ENCODE measurements at regions of chr6 and their contacts with region 1.

Region 1: GRCh38 chr6:170516783-170517616 is 36.1 kb downstream of the PSMB1 start:
- DNase-seq: peak; percentile 35 to 69
- ATAC-seq: peak; percentile 91 to 100 (median 100)
- H3K4me3 ChIP-seq: no peak overlapping the region
- H3K4me3 Mint-ChIP-seq: peak overlapping the region; percentile 18
- H3K27ac ChIP-seq: no peak overlapping the region
- H3K27ac Mint-ChIP-seq: no peak overlapping the region
- H3K4me1 ChIP-seq: peaks cover 3% of the 10 kb centered on the region
- H3K4me1 Mint-ChIP-seq: peaks cover 9 to 14% of the 10 kb centered on the region in 2 donors
- H3K27me3 ChIP-seq: peaks cover 9% of the 10 kb centered on the region
- H3K27me3 Mint-ChIP-seq: peaks cover 45 to 53% of the 10 kb centered on the region in 2 donors
- CTCF ChIP-seq: peak; percentile 90

Region 2: DNA sequence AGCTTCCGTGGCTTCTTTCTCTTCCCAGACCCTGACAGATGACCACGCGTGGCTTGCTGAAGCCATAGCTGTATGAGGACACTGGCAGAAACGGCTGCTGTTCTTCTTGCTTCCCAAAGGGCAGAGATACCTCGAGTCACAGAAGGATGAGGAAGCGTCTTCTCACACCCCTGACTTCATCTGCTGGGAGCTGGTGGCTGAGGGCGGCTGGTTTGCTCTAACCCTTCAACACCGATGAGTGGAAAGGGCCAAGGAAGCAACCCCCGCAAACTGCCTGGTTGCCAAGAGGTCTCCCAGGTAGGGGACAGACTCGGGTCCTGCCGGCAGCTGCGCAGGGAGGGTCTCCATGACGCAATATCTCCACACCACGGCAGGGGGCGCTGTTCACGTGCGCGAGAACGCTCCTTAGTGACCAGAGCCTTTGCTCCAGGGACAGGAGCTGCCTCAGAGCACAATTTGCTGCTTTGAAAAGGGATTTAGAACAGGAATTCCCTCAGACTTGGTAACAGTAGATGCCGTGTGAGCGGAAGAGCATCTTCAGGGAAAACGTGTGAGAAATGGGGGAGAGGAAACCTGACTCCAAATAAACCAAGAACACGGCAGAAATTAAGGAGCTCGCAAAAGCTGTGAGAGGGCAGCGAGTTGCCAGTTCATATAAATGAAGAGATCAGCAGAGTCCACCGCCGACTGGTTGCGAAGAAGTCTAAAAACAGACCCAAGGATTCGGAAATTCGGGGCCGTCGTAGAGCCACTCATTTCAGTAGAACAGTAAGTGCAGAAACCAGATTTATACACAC is 685.4 kb before region 1 on chr6:
- intact Hi-C with region 1: loop called (anchors 1 kb)
- DNase-seq: peak; percentile 69 to 81
- ATAC-seq: peak; percentile 73 to 87 (median 86)
- H3K4me3 ChIP-seq: no peak overlapping the region
- H3K4me3 Mint-ChIP-seq: no peak overlapping the region
- H3K27ac ChIP-seq: no peak overlapping the region
- H3K27ac Mint-ChIP-seq: no peak overlapping the region
- H3K4me1 ChIP-seq: peaks cover 7% of the 10 kb centered on the region
- H3K4me1 Mint-ChIP-seq: peaks cover 11 to 17% of the 10 kb centered on the region in 2 donors
- H3K27me3 ChIP-seq: peaks cover 8% of the 10 kb centered on the region
- H3K27me3 Mint-ChIP-seq: peaks cover 53 to 69% of the 10 kb centered on the region in 2 donors
- CTCF ChIP-seq: peak; percentile 97

Region 3: DNA sequence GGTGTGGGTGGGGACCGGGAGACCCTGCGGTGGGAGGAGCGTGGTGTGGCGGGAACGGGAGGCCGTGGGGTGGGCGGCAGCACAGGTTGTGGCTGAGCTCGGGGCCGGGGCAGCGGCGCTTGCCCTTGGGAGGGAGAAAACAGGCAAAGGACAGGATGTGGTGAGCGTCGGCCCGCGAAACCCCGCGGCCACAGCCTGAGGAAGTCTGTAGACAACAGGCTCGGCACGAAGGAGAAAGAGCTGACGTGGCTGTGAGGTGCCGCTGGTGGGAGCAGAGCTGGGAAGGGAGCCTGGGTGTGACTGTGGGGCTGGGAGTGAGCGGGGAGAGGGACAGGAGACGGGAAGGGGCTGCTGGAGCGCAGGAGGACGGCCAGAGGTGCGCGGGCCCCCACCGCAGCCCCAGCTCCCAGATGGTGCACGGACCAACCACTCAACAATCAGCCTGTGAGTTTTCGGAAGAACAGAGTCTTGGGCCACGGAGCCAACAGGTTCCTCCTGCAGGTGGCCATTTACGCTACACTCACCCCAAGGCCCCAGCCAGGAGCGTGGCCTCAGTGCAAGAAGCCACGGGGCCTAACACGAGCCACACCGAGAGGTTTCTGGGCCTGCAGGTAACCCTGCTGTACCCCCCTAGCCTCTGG is 428.9 kb before region 1 on chr6:
- intact Hi-C with region 1: loop called (anchors 2 kb)
- DNase-seq: peak; percentile 55 to 81
- ATAC-seq: peak; percentile 66 to 79 (median 74)
- H3K4me3 ChIP-seq: peak overlapping the region; percentile 48
- H3K4me3 Mint-ChIP-seq: peak overlapping the region; percentile 86
- H3K27ac ChIP-seq: peak overlapping the region; percentile 88
- H3K27ac Mint-ChIP-seq: peak overlapping the region; percentile 94 to 96
- H3K4me1 ChIP-seq: peaks cover 56% of the 10 kb centered on the region
- H3K4me1 Mint-ChIP-seq: peaks cover 29 to 52% of the 10 kb centered on the region in 2 donors
- H3K27me3 ChIP-seq: no peaks in the 10 kb centered on the region
- H3K27me3 Mint-ChIP-seq: no peaks in the 10 kb centered on the region
- CTCF ChIP-seq: no peak

Region 4: DNA sequence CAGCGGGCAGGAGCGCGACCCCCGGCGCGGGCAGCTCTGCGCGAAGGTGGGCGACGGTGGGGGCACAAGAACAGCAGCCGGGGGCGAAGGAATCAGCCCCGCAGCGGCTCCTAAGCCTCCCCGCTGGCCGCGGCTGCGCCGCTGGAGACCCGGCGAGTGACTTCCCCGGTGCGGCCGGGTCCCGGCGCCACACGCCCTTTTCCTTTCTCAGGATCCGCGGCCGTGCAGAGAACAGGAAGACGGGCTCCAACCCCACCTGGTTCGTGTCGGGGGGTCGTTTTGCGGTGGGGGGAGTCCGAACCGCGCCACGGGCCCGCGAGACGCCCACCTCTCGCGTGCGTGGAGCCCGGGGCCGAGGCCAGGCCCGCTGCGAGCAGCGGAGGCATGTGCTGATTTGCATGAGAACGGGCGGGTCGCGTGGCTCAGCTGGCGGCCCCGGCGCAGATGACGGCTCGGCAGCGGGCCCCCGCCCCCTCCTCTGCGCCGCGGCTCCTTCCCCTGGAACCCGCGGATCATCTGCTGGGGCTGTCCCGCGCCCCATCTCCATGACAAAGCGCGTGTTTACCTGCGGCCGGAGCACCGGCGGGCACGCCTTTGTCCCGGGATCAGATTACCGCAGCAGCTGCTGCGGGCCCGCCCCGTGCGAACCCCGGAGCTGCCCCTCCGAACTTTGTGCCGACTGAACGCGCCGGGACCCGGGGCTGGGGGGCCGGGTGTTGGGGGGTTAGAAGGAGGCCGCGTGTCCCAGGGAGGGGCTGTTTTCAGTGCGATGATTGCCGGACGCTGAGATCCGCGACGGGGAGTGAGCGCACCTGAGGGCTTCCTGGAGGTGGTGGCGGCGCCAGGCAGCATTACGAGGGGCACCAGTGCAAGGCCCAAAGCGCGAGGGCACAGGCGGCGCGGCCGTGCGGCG is 221.2 kb before region 1 on chr6:
- intact Hi-C with region 1: loop called (anchors 10 kb)
- DNase-seq: peak in 1 of 2 donors; percentile 69
- ATAC-seq: peak; percentile 57 to 67 (median 59)
- H3K4me3 ChIP-seq: peak overlapping the region; percentile 4
- H3K4me3 Mint-ChIP-seq: peak overlapping the region; percentile 73
- H3K27ac ChIP-seq: no peak overlapping the region
- H3K27ac Mint-ChIP-seq: peak overlapping the region in 1 of 2 donors; percentile 18
- H3K4me1 ChIP-seq: peaks cover 44% of the 10 kb centered on the region
- H3K4me1 Mint-ChIP-seq: peaks cover 17 to 44% of the 10 kb centered on the region in 2 donors
- H3K27me3 ChIP-seq: peaks cover 33% of the 10 kb centered on the region
- H3K27me3 Mint-ChIP-seq: peaks cover 25 to 60% of the 10 kb centered on the region in 2 donors
- CTCF ChIP-seq: no peak

Region 5: DNA sequence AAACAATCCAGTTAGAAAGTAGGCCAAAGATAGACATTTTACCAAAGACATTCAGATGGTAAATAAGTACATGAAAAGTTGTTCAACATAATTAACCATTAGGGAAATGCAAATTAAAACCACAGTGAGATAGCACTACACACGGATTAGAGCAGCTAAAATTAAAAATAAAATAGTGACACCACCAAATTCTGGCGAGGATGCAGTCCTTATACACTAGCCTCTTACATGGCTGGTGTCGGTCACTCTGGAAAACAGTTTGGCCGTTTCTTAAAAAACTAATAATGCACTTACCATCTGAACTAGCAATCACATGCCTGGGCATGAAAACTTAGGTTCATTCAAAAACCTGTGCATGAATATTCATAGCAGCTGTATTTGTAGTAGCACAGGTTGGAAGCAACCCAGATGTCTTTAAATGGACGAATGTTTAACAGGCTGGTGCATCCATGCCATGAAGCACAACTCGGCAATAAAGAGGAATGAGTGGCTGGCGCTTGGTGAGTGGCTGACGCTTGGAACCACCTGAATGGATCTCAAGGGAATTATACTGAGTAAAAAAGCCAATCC is 133.4 kb before region 1 on chr6:
- intact Hi-C with region 1: loop called (anchors 5 kb)
- DNase-seq: no peak
- ATAC-seq: no peak
- H3K4me3 ChIP-seq: no peak overlapping the region
- H3K4me3 Mint-ChIP-seq: no peak overlapping the region
- H3K27ac ChIP-seq: no peak overlapping the region
- H3K27ac Mint-ChIP-seq: peak overlapping the region in 1 of 2 donors; percentile 4
- H3K4me1 ChIP-seq: peaks cover 4% of the 10 kb centered on the region
- H3K4me1 Mint-ChIP-seq: peaks cover 10 to 34% of the 10 kb centered on the region in 2 donors
- H3K27me3 ChIP-seq: no peaks in the 10 kb centered on the region
- H3K27me3 Mint-ChIP-seq: no peaks in the 10 kb centered on the region
- CTCF ChIP-seq: no peak

Region 6: GRCh38 chr6:170429450-170429849 is 87.5 kb before region 1 on chr6:
- intact Hi-C with region 1: no loop called
- DNase-seq: no peak
- ATAC-seq: no peak
- H3K4me3 ChIP-seq: no peak overlapping the region
- H3K4me3 Mint-ChIP-seq: no peak overlapping the region
- H3K27ac ChIP-seq: no peak overlapping the region
- H3K27ac Mint-ChIP-seq: no peak overlapping the region
- H3K4me1 ChIP-seq: no peaks in the 10 kb centered on the region
- H3K4me1 Mint-ChIP-seq: peaks cover 7 to 16% of the 10 kb centered on the region in 2 donors
- H3K27me3 ChIP-seq: no peaks in the 10 kb centered on the region
- H3K27me3 Mint-ChIP-seq: no peaks in the 10 kb centered on the region
- CTCF ChIP-seq: no peak

Measured in natural killer cell (primary cell).